ENCODE measurements at regions of chr1 and their contacts with region 1.

Region 1: GRCh38 chr1:209627732-209628196 is 24.5 kb downstream of the LAMB3 start:
- DNase-seq: peak; percentile 65 to 95 (median 88)

Region 2: GRCh38 chr1:209576798-209577197 is 51.0 kb before region 1 on chr1:
- intact Hi-C with region 1: loop called (anchors 5 kb)
- DNase-seq: peak; percentile 75 to 94 (median 86)

Region 3: DNA sequence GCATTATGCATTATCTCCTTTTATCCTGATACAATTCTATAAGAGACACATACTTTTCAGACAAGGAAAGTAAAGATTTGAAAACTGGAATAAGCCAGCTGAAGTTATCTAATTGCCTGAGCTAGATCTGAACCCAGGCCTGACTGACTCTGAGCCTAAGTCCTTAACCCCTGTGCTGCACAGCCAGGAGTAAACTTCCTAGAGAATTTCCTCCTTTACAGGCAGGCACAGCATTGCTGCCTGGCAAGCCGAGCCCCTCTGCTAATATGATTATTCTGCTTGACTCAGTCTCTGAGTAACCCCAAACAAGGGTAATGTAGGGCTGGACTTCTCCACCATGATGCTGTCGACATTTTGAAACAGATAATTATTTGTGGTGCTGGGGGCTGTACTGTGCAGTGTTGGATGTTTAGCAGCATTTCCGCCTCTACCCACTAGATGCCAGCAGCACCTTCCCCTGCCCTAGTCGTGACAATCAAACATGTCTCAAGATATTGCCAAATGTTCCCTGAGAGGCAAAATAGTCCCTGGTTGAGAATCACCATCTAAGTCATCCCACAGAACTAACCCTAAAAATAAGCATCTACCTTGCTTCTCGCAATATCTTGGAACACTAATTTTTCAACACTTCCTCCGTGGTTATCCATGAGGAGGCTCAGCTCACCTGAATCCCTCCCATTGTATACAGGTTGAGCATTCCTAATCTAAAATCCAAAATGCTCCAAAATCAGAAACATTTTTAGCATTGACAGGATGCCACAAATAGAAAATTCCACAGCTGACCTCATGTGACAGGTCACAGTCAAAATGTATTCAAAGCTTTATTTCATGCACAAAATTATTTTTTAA is 25.7 kb before region 1 on chr1:
- intact Hi-C with region 1: loop called (anchors 2 kb)
- DNase-seq: peak in 34 of 42 donors; percentile 43 to 84 (median 66)

Region 4: GRCh38 chr1:209774592-209774991 is 146.8 kb after region 1 on chr1:
- intact Hi-C with region 1: no loop called
- DNase-seq: no peak